Aorta (tissue), 5 donors: ENCODE measurements at regions of chr2 and their contacts with region 1.

Region 1: DNA sequence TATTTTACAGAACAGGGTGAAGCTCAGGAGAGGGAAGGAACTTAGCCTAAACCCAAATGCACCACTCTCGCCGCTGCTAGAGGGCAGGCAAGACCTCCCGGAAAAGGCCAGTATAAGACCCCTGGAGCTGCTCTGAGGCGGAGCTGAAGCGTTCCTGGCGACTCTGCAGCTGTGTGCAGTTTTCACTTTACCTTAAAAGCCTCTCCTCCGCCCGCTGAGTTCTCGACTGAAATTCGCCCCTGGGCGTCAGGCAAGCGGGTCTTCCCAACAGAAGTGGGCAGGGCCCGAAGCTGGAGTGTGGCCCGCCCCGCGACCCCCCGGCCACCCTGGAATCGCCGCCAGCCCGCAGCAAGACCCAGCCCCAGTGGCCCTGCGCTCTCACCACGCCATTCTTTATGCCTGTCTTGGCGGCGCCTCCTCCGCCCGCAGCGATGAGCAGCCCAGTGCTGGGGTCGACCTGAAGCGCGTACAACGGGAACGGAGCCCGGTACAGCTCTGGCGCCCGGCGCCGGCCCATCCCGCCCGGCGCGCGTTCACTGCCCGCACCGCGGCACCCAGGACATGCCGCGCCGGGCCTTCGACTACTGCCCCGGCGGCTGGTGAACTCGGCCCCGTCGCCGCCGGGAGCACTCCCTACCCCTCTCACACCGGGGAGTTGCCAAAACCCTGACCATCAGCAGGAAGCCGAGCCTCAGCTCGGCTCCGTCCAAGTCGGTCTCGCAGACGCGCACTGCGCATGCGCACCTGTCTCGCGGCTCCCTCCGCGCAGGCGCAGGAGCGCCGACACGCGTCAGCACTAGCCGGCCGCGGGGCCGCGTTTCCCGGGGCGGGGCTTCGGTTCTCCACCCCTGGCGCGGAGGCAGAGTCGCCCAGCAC is at the start of gene PREB:
- DNase-seq: peak; percentile 98 to 100
- ATAC-seq: peak; percentile 96
- H3K4me3 ChIP-seq: peak within 1 kb of the TSS; percentile 83 to 89
- H3K27ac ChIP-seq: peak within 1 kb of the TSS in 1 of 2 donors; percentile 30
- H3K4me1 ChIP-seq: no peaks in the 10 kb centered on the region
- H3K27me3 ChIP-seq: no peaks in the 10 kb centered on the region
- total RNA-seq, gene PREB: 42.1 to 48.1 TPM

Region 2: DNA sequence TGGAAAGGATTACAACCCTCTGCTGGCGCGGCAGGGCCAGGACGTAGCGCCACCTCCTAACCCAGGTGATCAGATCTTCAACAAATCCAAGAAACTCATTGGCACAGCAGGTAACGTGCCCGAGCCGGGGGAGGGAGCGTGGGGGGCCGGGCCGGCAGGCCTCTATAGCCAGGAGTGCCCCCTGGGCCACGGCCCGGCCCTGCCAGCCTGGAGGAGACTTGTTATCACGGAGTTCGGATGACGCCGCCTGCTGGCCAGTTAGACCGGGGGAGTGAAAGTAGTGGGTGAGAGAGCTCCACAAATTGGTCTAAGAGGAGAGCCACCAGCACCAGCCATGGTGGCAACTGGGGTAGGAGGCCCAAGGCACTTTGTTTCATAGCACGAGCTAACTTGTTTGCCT is 110.0 kb before region 1 on chr2:
- intact Hi-C with region 1: no loop called
- DNase-seq: no peak
- ATAC-seq: no peak
- H3K4me3 ChIP-seq: no peak overlapping the region
- H3K27ac ChIP-seq: no peak overlapping the region
- H3K4me1 ChIP-seq: no peaks in the 10 kb centered on the region
- H3K27me3 ChIP-seq: no peaks in the 10 kb centered on the region

Region 3: GRCh38 chr2:27211829-27212627 is 77.9 kb after region 1 on chr2 and contains the starts of genes ATRAID and SLC5A6:
- intact Hi-C with region 1: loop called in 1 of 2 experiments (anchors 5 kb)
- DNase-seq: peak; percentile 93 to 96
- ATAC-seq: peak; percentile 99
- H3K4me3 ChIP-seq: peak within 1 kb of the TSS; percentile 63 to 83
- H3K27ac ChIP-seq: peak within 1 kb of the TSS; percentile 65 to 97
- H3K4me1 ChIP-seq: no peaks in the 10 kb centered on the region
- H3K27me3 ChIP-seq: no peaks in the 10 kb centered on the region
- total RNA-seq, gene ATRAID: 66.9 to 93.8 TPM
- total RNA-seq, gene SLC5A6: 17.9 to 21.3 TPM